ENCODE measurements at regions of chr2 and their contacts with region 1.

Region 1: DNA sequence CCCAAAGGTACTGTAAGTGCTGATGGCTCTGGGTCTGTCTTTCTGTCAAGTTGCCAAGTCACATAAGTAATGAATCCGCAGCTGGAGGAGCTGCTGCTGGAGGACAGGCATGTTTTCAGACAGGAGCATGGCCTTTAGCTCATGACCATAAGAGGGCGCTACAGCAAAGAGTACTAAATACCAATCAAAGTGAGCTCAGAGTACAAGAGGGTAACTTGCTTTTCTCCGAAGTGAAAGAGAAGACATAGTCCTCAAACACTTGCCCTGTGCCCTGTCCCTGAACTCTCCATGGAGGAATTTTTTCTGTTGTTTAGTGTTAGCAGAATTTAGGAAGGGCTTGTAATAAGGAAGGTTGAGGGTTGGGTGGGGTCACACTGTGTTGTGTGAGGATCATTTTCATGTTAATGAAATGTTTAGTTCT is 58.0 kb upstream of the EML6 start:
- DNase-seq: peak; percentile 57
- H3K4me3 Mint-ChIP-seq: no peak overlapping the region
- H3K27ac Mint-ChIP-seq: peak overlapping the region; percentile 73
- H3K4me1 Mint-ChIP-seq: peaks cover 17% of the 10 kb centered on the region
- H3K27me3 Mint-ChIP-seq: no peaks in the 10 kb centered on the region

Region 2: GRCh38 chr2:54106631-54107454 is 558.6 kb before region 1 on chr2:
- CTCF ChIA-PET with region 1: interaction called, 13 read pairs
- DNase-seq: peak; percentile 56
- H3K4me3 Mint-ChIP-seq: no peak overlapping the region
- H3K27ac Mint-ChIP-seq: no peak overlapping the region
- H3K4me1 Mint-ChIP-seq: peaks cover 9% of the 10 kb centered on the region
- H3K27me3 Mint-ChIP-seq: peaks cover 17% of the 10 kb centered on the region

Region 3: DNA sequence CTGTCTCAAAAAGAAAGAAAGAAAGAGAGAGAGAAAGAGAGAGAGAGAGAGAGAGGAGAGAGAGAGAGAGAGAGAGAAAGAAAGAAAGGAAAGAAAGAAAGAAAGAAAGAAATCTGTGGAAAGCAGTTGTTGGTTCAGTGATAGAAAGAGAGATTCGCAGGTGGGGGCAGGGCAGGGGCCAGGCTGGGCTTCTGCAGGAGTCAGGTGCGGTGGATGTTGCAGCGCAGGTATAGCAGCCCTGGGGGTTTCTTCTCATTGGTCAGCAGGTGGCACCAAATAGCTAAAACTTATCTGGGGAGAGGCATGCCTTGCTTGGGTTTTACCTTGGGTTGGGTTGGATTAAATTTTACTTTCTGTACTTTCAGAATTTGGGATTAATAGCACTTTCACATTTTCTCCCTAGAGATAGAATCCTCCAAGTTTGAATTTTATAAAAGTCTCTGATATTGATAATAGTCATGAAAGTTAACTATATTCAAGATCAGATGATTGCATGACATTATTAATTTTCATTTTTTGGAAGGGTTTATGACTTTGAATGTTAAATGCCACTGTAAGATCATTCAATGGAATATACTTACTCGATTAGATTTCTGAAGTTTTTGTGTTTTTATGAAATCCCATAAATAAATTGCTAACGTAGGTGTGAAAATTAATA is 142.7 kb before region 1 on chr2:
- CTCF ChIA-PET with region 1: interaction called, 23 read pairs
- DNase-seq: peak; percentile 74
- H3K4me3 Mint-ChIP-seq: peak overlapping the region; percentile 27
- H3K27ac Mint-ChIP-seq: peak overlapping the region; percentile 67
- H3K4me1 Mint-ChIP-seq: peaks cover 19% of the 10 kb centered on the region
- H3K27me3 Mint-ChIP-seq: peaks cover 17% of the 10 kb centered on the region

Region 4: DNA sequence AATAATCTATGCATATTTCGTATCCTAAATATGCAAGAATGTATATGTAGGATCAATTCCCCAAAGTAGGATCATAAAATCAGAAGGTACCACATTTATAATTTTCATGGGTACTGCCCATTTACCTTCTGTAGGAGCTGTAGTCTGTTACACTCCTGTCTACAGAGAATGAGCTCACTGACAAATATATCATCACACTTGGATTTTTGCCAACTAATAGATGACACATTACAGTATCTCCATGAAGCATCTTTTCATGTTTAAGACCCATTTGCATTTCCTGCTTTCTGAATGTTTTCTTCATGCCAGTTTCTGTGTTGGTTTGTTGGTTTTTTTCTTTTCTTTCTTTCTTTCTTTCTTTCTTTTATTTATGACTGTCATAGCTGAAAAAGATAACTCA is 12.9 kb before region 1 on chr2:
- CTCF ChIA-PET with region 1: interaction called, 19 read pairs
- DNase-seq: no peak
- H3K4me3 Mint-ChIP-seq: no peak overlapping the region
- H3K27ac Mint-ChIP-seq: peak overlapping the region; percentile 60
- H3K4me1 Mint-ChIP-seq: peaks cover 8% of the 10 kb centered on the region
- H3K27me3 Mint-ChIP-seq: no peaks in the 10 kb centered on the region

Region 5: GRCh38 chr2:54680397-54681041 is 15.1 kb after region 1 on chr2:
- CTCF ChIA-PET with region 1: interaction called, 28 read pairs
- DNase-seq: peak; percentile 28
- H3K4me3 Mint-ChIP-seq: peak overlapping the region; percentile 52
- H3K27ac Mint-ChIP-seq: peak overlapping the region; percentile 50
- H3K4me1 Mint-ChIP-seq: peaks cover 28% of the 10 kb centered on the region
- H3K27me3 Mint-ChIP-seq: peaks cover 52% of the 10 kb centered on the region

Region 6: GRCh38 chr2:54691445-54692135 is 26.1 kb after region 1 on chr2:
- CTCF ChIA-PET with region 1: interaction called, 15 read pairs
- DNase-seq: no peak
- H3K4me3 Mint-ChIP-seq: no peak overlapping the region
- H3K27ac Mint-ChIP-seq: no peak overlapping the region
- H3K4me1 Mint-ChIP-seq: peaks cover 10% of the 10 kb centered on the region
- H3K27me3 Mint-ChIP-seq: peaks cover 18% of the 10 kb centered on the region

Region 7: DNA sequence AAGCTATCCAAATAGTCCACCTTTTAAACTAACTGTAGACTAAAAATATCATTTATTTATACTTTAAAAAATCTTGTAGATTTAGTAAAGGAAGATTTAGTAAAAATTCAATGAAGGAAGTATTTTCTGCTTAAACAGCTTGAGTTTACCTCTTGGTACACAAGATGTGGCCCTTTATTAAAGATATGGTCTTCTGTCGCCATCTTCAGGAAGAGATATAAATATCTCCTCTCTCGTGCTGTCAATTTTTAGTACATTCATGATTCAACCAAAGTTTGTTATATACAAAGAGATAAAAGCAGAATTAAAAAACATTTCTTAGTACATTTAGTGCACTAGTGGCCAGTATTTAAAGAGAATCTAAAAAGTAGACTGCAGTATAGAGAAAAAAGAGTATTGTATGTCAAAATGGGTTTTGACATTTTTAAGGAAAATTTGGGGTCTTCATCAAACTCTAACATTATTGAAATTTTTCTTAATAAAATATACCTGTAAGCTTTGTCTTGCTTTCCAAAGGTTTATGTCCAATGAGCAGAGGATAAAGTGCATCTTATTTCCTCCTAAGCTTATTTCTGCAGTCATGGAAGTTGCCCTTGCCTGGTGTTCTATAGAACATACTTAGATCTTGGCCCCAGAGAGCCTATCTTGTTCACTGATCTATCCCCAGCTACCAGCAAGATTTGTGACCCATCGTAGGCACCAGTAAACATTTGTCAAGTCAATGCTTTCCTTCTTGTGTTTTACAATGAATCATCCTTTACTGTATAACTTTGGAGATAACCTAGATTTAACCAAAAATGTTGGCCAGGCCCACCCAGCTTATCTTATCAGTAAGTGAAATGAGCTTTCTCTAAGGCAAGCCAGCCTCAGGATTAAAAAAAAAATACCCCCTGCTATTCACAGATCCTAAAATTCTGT is 39.5 kb after region 1 on chr2:
- CTCF ChIA-PET with region 1: interaction called, 90 read pairs
- DNase-seq: no peak
- H3K4me3 Mint-ChIP-seq: no peak overlapping the region
- H3K27ac Mint-ChIP-seq: no peak overlapping the region
- H3K4me1 Mint-ChIP-seq: peaks cover 13% of the 10 kb centered on the region
- H3K27me3 Mint-ChIP-seq: peaks cover 24% of the 10 kb centered on the region

Region 8: DNA sequence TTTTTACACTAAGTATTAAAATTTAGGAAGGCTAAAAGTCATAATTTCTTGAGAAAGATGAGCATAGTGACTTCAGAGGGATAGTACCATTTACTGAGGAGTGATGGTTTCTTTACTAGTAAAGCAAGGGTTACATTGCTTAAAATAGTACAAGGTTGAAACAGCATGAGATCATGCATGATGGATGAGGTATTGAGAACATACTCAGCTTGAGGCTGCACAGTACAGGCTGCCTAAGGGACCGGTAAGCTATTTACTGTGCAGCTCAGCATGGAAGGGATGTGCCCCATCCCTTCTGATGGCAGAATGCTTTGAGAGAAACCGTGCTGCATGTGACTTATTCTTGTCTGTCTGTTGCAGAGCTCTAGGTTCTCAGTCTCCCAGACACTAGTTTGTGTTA is 180.1 kb after region 1 on chr2:
- CTCF ChIA-PET with region 1: no interaction called
- DNase-seq: no peak
- H3K4me3 Mint-ChIP-seq: no peak overlapping the region
- H3K27ac Mint-ChIP-seq: no peak overlapping the region
- H3K4me1 Mint-ChIP-seq: no peaks in the 10 kb centered on the region
- H3K27me3 Mint-ChIP-seq: no peaks in the 10 kb centered on the region

Region 9: GRCh38 chr2:54999182-54999581 is 333.7 kb after region 1 on chr2:
- CTCF ChIA-PET with region 1: no interaction called
- DNase-seq: no peak
- H3K4me3 Mint-ChIP-seq: no peak overlapping the region
- H3K27ac Mint-ChIP-seq: no peak overlapping the region
- H3K4me1 Mint-ChIP-seq: peaks cover 31% of the 10 kb centered on the region
- H3K27me3 Mint-ChIP-seq: no peaks in the 10 kb centered on the region